ENCODE measurements at regions of chr11 and their contacts with region 1.

Region 1: DNA sequence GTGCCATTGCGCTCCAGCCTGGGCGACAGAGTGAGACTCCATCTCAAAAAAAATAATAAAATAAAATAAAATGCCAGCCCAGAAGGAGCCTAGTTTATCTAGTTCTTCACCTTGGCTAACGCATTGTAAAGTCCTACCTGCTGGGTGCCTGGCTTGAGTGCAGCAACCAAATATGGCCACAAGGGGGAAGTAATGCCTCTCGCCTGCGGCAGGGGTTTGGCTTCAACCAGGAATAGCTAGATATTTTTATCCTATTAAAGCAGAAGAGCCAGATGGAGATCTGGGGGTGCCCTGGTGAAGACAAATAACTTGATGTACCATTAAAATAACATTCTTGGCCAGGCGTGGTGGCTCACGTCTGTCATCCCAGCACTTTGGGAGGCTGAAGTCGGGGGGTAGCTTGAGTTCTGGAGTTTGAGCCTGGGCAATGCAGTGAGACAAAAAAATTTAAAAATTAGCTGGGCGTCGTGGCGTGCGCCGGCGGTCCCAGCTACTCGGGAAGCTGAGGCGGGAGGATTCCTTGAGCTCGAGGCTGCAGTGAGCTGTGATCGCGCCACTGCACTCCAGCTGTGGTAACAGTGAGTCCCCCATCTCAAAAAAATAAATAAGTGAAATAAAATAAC is 20.6 kb upstream of the PLEKHB1 start:
- DNase-seq: peak; percentile 39 to 90
- H3K4me3 ChIP-seq: no peak overlapping the region
- H3K27ac ChIP-seq: no peak overlapping the region
- H3K4me1 ChIP-seq: peaks cover 0 to 8% (median 3%) of the 10 kb centered on the region in 4 experiments; a peak in 5 of 7 replicates
- H3K27me3 ChIP-seq: peaks cover 7 to 36% (median 28%) of the 10 kb centered on the region in 4 experiments; a peak in 6 of 7 replicates
- CTCF ChIP-seq: peak; percentile 89 to 96 (median 93)
- EP300 ChIP-seq: no peak
- POLR2A ChIP-seq: no peak
- RAD21 ChIP-seq: peak; percentile 93 to 96

Region 2: GRCh38 chr11:73414977-73415651 is 210.7 kb before region 1 on chr11:
- CTCF ChIA-PET with region 1: interaction called, 14 read pairs
- POLR2A ChIA-PET with region 1: no interaction called
- DNase-seq: no peak
- H3K4me3 ChIP-seq: no peak overlapping the region
- H3K27ac ChIP-seq: no peak overlapping the region
- H3K4me1 ChIP-seq: no peaks in the 10 kb centered on the region
- H3K27me3 ChIP-seq: no peaks in the 10 kb centered on the region
- CTCF ChIP-seq: no peak
- EP300 ChIP-seq: no peak
- POLR2A ChIP-seq: no peak
- RAD21 ChIP-seq: no peak

Region 3: DNA sequence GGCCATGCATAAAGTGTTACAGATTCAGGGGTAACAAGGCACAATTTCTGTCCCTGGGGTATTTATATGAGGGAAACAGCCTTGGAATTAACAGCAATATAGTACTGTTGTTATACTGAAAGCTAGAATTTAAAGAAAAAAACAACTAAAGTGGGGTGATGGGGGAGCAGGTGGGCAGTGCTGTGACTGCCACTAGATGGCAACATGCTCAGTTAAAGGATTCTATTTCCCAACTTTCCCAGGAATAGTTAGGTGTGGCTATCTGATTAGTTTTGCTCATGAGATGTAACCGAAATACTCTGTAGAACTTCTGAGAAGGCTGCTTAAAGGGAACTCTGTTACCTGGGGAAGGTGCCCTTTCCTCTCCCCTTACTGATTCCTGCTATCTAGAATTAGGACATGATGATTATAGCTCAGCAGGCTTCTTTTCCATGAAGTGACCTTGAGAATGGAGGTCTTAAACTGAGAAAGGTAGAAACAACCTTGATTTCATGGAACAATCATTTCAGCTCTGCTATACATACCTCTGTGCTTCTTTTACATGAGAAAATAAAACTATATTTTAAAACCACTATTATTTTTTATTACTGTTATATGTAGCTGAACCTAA is 147.0 kb before region 1 on chr11:
- CTCF ChIA-PET with region 1: interaction called, 19 read pairs
- POLR2A ChIA-PET with region 1: no interaction called
- DNase-seq: no peak
- H3K4me3 ChIP-seq: no peak overlapping the region
- H3K27ac ChIP-seq: no peak overlapping the region
- H3K4me1 ChIP-seq: peaks cover 0 to 3% (median 1%) of the 10 kb centered on the region in 4 experiments; a peak in 2 of 7 replicates
- H3K27me3 ChIP-seq: no peaks in the 10 kb centered on the region
- CTCF ChIP-seq: peak; percentile 74 to 93 (median 76)
- EP300 ChIP-seq: no peak
- POLR2A ChIP-seq: no peak
- RAD21 ChIP-seq: peak; percentile 65 to 75

Region 4: GRCh38 chr11:73612601-73613140 is 13.1 kb before region 1 on chr11:
- CTCF ChIA-PET with region 1: interaction called, 14 read pairs
- POLR2A ChIA-PET with region 1: no interaction called
- DNase-seq: no peak
- H3K4me3 ChIP-seq: no peak overlapping the region
- H3K27ac ChIP-seq: no peak overlapping the region
- H3K4me1 ChIP-seq: no peaks in the 10 kb centered on the region
- H3K27me3 ChIP-seq: no peaks in the 10 kb centered on the region
- CTCF ChIP-seq: no peak
- EP300 ChIP-seq: no peak
- POLR2A ChIP-seq: no peak
- RAD21 ChIP-seq: no peak

Region 5: DNA sequence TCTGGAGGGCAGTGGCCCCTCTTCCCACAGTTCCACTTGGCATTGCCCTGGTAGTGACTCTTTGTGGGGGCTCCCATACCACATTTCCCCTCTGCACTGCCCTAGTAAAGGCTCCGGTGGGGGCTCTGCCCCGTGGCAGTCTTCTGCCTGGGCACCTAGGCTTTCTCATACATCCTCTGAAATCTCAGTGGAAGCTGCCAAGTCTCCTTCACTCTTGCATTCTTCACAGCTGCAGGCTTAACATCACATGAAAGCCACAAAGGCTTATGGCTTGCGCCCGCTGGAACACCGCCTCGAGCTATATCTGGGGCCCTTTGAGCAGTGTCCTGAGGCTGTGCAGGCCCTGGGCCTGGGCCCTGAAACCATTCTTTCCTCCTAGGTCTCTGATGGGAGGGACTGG is 45.9 kb after region 1 on chr11:
- CTCF ChIA-PET with region 1: interaction called, 14 read pairs
- POLR2A ChIA-PET with region 1: no interaction called
- DNase-seq: no peak
- H3K4me3 ChIP-seq: no peak overlapping the region
- H3K27ac ChIP-seq: no peak overlapping the region
- H3K4me1 ChIP-seq: no peaks in the 10 kb centered on the region
- H3K27me3 ChIP-seq: no peaks in the 10 kb centered on the region
- CTCF ChIP-seq: no peak
- EP300 ChIP-seq: no peak
- POLR2A ChIP-seq: no peak
- RAD21 ChIP-seq: no peak

Measured in H1 (cell line).